Activated naive CD4-positive, alpha-beta T cell treated with anti-CD3 and anti-CD28 coated beads for 36 hours (primary cell): ENCODE measurements at regions of chr13 and their contacts with region 1.

Region 1: DNA sequence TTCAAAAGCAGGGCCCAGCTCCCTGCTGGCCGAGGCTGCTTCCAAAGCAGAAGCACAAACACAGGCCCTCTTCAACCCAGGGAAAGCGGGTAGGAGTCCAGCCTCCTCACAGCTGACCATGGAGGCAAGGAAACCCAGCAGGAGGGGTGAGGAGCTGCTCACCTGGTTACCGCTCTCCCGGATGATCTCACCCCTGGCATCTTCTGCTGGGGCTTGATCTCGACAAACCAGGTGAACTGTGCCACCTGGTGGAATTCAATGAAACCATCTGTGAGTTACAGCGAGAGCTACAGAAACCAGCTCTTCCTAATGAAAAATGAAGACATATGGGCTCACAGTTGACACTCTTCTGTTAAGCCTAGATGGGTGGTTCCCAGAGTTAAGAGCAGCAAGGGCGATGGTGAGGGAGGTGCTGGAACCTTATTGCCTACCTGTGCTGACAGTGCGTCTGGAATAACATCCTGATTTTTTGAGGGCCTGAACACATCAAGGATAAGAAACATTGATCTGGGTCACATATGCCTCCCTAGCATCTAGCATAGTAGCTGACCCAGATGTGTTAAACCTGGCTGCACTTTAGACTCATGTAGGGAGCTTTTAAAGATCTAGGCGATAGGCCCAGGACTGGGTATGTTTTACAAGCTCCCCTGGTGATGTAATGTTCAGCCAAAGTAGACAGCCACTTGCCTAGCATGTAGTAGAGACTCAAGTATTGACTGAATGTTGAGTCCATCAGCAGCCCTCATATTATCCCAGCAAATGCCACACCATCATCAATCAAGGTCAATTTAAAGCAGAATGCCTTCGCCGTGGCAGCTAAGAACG is 6.1 kb downstream of the DHRS12 start:
- DNase-seq: peak; percentile 83
- H3K4me3 Mint-ChIP-seq: no peak overlapping the region
- H3K27ac Mint-ChIP-seq: no peak overlapping the region
- H3K4me1 Mint-ChIP-seq: peaks cover 43% of the 10 kb centered on the region
- H3K27me3 Mint-ChIP-seq: no peaks in the 10 kb centered on the region

Region 2: GRCh38 chr13:51148952-51149573 is 648.8 kb before region 1 on chr13:
- CTCF ChIA-PET with region 1: no interaction called
- intact Hi-C with region 1: loop called (anchors 2 kb)
- DNase-seq: no peak
- H3K4me3 Mint-ChIP-seq: no peak overlapping the region
- H3K27ac Mint-ChIP-seq: no peak overlapping the region
- H3K4me1 Mint-ChIP-seq: peaks cover 2% of the 10 kb centered on the region
- H3K27me3 Mint-ChIP-seq: peaks cover 2% of the 10 kb centered on the region

Region 3: GRCh38 chr13:51286135-51287002 is 511.5 kb before region 1 on chr13:
- CTCF ChIA-PET with region 1: interaction called, 36 read pairs
- intact Hi-C with region 1: loop called (anchors 2 kb)
- DNase-seq: peak; percentile 87
- H3K4me3 Mint-ChIP-seq: no peak overlapping the region
- H3K27ac Mint-ChIP-seq: no peak overlapping the region
- H3K4me1 Mint-ChIP-seq: no peaks in the 10 kb centered on the region
- H3K27me3 Mint-ChIP-seq: no peaks in the 10 kb centered on the region

Region 4: GRCh38 chr13:51444922-51445321 is 353.0 kb before region 1 on chr13:
- CTCF ChIA-PET with region 1: interaction called, 17 read pairs
- intact Hi-C with region 1: no loop called
- DNase-seq: no peak
- H3K4me3 Mint-ChIP-seq: no peak overlapping the region
- H3K27ac Mint-ChIP-seq: no peak overlapping the region
- H3K4me1 Mint-ChIP-seq: peaks cover 18% of the 10 kb centered on the region
- H3K27me3 Mint-ChIP-seq: no peaks in the 10 kb centered on the region

Region 5: DNA sequence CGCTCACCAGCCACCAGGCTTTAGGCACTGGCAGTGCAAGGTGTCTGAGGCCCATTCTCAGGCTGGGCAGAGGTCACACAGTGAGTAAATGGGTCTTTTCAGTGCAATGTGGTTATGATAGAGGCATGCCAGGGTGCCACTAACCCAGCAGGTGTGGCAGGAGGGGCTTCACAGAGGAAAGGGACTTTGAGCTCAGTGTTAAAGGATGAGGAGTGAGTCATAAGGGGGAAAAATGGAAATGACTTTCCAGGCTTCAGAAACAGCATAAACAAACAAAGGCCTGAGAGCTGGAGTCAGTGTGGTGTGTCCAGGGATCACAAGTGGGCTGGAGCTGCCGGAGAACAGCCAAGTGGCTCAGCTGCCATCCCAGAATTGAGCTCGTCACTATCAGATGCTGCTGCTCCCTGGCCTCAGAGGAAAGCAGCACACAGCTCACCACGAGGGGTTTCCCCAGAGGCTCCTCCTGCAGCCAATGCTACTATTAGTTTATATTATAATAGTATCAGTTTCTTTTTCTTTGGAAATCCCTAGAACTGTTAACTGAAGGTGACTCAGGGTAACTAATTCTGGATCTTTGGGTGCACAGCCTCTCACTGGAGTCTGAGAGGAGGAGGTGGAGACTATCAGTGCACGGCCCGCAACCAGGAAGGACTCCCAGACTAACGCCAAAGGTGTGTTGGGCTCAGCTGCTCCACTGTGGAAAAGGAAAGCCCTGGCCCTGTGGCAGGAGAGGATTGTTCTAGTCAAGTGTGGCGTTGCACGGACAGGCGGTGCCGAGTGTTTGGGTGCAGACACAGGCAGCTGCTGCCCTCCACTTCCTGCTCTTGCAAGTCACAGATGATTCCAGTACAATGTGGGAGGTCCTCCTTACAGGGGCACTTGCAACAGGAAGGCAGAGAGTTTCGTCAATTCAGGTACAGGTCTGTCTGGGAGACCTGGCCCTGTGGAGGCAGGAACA is 33.4 kb before region 1 on chr13:
- CTCF ChIA-PET with region 1: interaction called, 13 read pairs
- intact Hi-C with region 1: loop called (anchors 1 kb)
- DNase-seq: peak; percentile 84
- H3K4me3 Mint-ChIP-seq: peak overlapping the region; percentile 73
- H3K27ac Mint-ChIP-seq: peak overlapping the region; percentile 82
- H3K4me1 Mint-ChIP-seq: peaks cover 35% of the 10 kb centered on the region
- H3K27me3 Mint-ChIP-seq: no peaks in the 10 kb centered on the region

Region 6: DNA sequence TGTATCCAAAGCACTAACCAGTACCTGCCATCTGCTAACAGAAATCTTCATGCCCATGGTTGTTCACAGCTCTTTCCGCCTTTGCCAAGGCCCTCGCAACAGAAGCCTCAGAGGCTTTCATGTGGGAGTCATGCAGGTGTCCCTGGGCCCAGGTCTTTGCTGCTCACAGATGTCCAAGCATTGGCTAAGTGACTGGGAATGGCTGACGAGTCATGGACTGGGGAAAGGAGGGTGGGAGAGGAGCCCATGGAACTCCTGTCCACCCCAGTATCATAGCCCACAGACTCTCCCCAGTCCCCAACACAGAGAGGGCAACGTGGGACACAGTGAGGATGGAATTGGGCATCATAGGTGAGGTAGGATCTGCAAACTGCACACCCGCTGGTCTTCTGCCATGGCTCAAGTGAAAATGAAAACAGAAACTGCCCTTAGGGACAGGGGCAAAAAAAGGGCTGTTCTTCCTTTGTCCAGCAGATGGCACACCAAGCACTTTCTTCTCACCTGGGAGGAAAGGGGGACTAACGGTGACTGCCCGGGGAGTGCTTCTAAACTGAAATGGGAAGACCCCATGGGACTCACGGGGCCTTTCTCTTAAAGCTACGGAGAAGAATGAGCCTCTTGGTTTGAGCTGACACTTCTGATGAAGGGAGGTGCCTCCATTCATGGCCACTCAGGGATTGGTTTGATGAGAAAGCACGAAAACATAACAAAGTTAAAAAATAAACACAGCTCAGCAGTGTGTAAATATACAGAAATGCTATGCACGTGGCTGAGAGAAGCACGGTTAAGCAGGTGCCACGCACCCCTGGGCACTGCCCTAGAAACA is 17.2 kb after region 1 on chr13:
- CTCF ChIA-PET with region 1: interaction called, 15 read pairs
- intact Hi-C with region 1: no loop called
- DNase-seq: peak; percentile 89
- H3K4me3 Mint-ChIP-seq: peak overlapping the region; percentile 62
- H3K27ac Mint-ChIP-seq: peak overlapping the region; percentile 87
- H3K4me1 Mint-ChIP-seq: peaks cover 86% of the 10 kb centered on the region
- H3K27me3 Mint-ChIP-seq: no peaks in the 10 kb centered on the region

Region 7: DNA sequence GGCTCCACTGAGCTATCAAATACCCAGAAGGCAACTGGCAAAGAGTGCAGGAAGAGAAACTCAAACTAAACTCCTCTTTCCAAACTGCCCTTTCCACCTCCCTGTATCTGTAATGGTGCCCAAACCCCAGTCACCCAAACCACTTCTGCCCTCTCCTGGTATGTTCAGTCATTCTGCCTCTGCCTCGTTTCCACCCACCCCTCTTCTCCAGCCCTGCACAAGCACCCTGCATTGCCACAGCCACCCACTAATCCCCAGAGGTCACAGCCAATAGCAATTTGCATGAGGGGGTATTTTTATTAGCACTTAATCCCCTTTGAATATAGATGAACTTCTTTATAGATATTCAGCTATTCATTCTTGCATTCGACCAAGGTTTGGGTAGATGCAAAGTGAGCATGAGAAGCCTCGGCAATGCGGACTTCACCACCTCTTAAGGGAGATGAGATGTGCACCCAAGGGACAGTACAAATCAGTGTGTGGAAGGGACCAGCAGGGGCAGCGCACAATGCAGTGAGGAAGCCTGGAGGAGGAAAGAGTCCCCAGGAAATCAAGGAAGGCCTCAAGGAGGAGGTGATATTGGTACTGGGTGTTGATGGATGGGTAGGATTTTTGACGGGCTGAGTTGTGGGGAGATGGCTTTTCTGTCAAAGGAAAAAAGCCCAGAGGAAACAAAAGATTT is 34.7 kb after region 1 on chr13:
- CTCF ChIA-PET with region 1: interaction called, 14 read pairs
- intact Hi-C with region 1: no loop called
- DNase-seq: peak; percentile 79
- H3K4me3 Mint-ChIP-seq: no peak overlapping the region
- H3K27ac Mint-ChIP-seq: peak overlapping the region; percentile 57
- H3K4me1 Mint-ChIP-seq: peaks cover 44% of the 10 kb centered on the region
- H3K27me3 Mint-ChIP-seq: no peaks in the 10 kb centered on the region